Activated CD8-positive, alpha-beta T cell treated with anti-CD3 and anti-CD28 coated beads for 36 hours (primary cell): ENCODE measurements at regions of chr20 and their contacts with region 1.

Region 1: DNA sequence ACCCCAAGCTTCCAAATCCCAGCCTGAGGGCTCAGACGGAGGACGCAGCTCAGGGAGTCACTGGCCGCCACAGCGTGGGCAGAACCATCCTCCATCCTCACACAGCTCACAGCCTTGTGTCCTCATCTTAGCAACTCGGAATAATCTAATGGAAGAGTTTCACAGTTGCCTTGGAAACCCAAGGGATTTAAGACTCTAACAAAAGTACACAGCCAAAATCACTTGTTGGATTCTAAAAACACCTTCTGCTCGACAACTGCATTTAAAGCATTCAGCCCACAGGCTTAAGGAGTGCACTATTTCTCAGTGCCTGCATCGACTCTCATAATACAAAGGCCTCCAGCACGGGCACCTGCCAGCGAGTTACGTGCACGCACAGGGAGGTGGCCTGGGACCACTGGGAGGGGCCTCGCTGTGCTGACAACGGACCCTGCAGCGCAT is 45.4 kb downstream of the ZBTB46 start:
- DNase-seq: no peak
- ATAC-seq: no peak
- H3K4me3 Mint-ChIP-seq: no peak overlapping the region
- H3K27ac Mint-ChIP-seq: no peak overlapping the region
- H3K4me1 Mint-ChIP-seq: peaks cover 11% of the 10 kb centered on the region
- H3K27me3 Mint-ChIP-seq: no peaks in the 10 kb centered on the region
- CTCF ChIP-seq: no peak

Region 2: GRCh38 chr20:63707549-63708300 is 78.0 kb before region 1 on chr20 and contains the starts of genes ARFRP1 and ZGPAT:
- CTCF ChIA-PET with region 1: interaction called, 16 read pairs
- POLR2A ChIA-PET with region 1: no interaction called
- intact Hi-C with region 1: no loop called
- DNase-seq: peak; percentile 89
- ATAC-seq: peak; percentile 90
- H3K4me3 Mint-ChIP-seq: peak within 1 kb of the TSS; percentile 87
- H3K27ac Mint-ChIP-seq: peak within 1 kb of the TSS; percentile 77
- H3K4me1 Mint-ChIP-seq: peaks cover 41% of the 10 kb centered on the region
- H3K27me3 Mint-ChIP-seq: no peaks in the 10 kb centered on the region
- CTCF ChIP-seq: no peak
- total RNA-seq, gene ARFRP1: 41.7 to 44.2 TPM
- total RNA-seq, gene ZGPAT: 22.4 to 22.5 TPM

Region 3: GRCh38 chr20:63775096-63775978 is 10.4 kb before region 1 on chr20:
- CTCF ChIA-PET with region 1: interaction called, 37 read pairs
- POLR2A ChIA-PET with region 1: no interaction called
- intact Hi-C with region 1: no loop called
- DNase-seq: peak; percentile 68
- ATAC-seq: peak; percentile 61
- H3K4me3 Mint-ChIP-seq: no peak overlapping the region
- H3K27ac Mint-ChIP-seq: no peak overlapping the region
- H3K4me1 Mint-ChIP-seq: peaks cover 4% of the 10 kb centered on the region
- H3K27me3 Mint-ChIP-seq: no peaks in the 10 kb centered on the region
- CTCF ChIP-seq: peak; percentile 68

Region 4: GRCh38 chr20:63830841-63831588 is 45.3 kb after region 1 on chr20 and contains the start of gene ZBTB46:
- CTCF ChIA-PET with region 1: no interaction called
- POLR2A ChIA-PET with region 1: no interaction called
- intact Hi-C with region 1: no loop called
- DNase-seq: no peak
- ATAC-seq: peak; percentile 74
- H3K4me3 Mint-ChIP-seq: peak within 1 kb of the TSS; percentile 66
- H3K27ac Mint-ChIP-seq: no peak within 1 kb of the TSS
- H3K4me1 Mint-ChIP-seq: peaks cover 13% of the 10 kb centered on the region
- H3K27me3 Mint-ChIP-seq: peaks cover 41% of the 10 kb centered on the region
- CTCF ChIP-seq: no peak
- total RNA-seq, gene ZBTB46: 0.31 to 0.38 TPM

Region 5: GRCh38 chr20:63898882-63899558 is 113.3 kb after region 1 on chr20:
- CTCF ChIA-PET with region 1: no interaction called
- POLR2A ChIA-PET with region 1: no interaction called
- intact Hi-C with region 1: no loop called
- DNase-seq: peak; percentile 35
- ATAC-seq: no peak
- H3K4me3 Mint-ChIP-seq: no peak overlapping the region
- H3K27ac Mint-ChIP-seq: peak overlapping the region; percentile 48
- H3K4me1 Mint-ChIP-seq: peaks cover 51% of the 10 kb centered on the region
- H3K27me3 Mint-ChIP-seq: no peaks in the 10 kb centered on the region
- CTCF ChIP-seq: no peak